ENCODE measurements at regions of chr9 and their contacts with region 1.

Region 1: DNA sequence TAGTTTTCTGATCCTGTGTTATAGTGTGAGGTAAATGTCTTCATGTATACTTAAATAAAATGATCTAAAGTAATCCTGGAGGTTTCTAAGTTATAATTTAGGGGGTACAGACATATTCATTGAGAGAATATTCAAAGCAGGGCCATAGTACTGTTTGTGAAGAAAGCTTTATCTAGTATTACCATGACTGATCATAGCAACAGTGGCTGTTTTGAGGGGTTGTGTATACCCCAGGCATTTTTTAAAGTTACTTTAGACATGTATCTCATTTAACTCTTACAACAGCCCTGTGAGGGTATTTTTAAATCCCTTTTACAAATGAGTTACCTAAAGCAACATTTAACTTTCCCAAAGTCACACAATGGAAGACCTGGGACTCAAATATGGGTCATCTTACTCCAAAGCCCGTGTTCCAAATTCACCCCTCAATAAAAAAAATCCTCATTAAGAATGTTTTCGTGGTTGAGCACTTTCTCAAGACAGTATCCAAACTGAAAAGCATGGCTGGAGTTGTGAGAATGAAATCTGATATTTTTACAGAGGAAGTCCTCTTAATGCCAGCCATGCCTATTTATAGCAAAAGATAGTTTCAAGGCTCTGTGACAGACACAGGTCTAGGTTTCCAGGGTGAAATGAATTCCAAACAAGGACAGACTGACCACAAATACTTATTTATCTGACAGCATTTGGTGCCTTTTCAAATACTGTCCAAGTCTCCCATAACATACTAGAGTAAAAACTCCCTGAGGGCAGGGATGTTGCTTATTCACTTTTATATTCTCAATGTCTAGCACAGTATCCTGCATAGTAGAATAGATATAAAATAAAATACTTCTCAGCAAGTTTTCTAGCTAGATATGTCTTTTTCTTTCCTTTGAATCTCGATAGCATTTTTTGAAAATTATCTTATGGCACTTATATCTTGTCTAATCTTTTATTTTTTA is 10.4 kb downstream of the STOM start:
- DNase-seq: no peak
- H3K4me3 Mint-ChIP-seq: peak overlapping the region; percentile 62
- H3K27ac Mint-ChIP-seq: peak overlapping the region; percentile 53
- H3K4me1 Mint-ChIP-seq: peaks cover 67% of the 10 kb centered on the region
- H3K27me3 Mint-ChIP-seq: no peaks in the 10 kb centered on the region

Region 2: GRCh38 chr9:121369595-121370265 is 10.1 kb after region 1 on chr9 and contains the start of gene STOM:
- intact Hi-C with region 1: loop called (anchors 1 kb)
- DNase-seq: no peak
- H3K4me3 Mint-ChIP-seq: peak within 1 kb of the TSS; percentile 87
- H3K27ac Mint-ChIP-seq: peak within 1 kb of the TSS; percentile 96
- H3K4me1 Mint-ChIP-seq: peaks cover 77% of the 10 kb centered on the region
- H3K27me3 Mint-ChIP-seq: no peaks in the 10 kb centered on the region
- total RNA-seq, gene STOM: 51.1 and 51.7 TPM in 2 replicates

Region 3: GRCh38 chr9:121399883-121400607 is 40.4 kb after region 1 on chr9:
- intact Hi-C with region 1: no loop called
- DNase-seq: no peak
- H3K4me3 Mint-ChIP-seq: no peak overlapping the region
- H3K27ac Mint-ChIP-seq: no peak overlapping the region
- H3K4me1 Mint-ChIP-seq: no peaks in the 10 kb centered on the region
- H3K27me3 Mint-ChIP-seq: peaks cover 22% of the 10 kb centered on the region